ENCODE measurements at regions of chr19 and their contacts with region 1.

Region 1: DNA sequence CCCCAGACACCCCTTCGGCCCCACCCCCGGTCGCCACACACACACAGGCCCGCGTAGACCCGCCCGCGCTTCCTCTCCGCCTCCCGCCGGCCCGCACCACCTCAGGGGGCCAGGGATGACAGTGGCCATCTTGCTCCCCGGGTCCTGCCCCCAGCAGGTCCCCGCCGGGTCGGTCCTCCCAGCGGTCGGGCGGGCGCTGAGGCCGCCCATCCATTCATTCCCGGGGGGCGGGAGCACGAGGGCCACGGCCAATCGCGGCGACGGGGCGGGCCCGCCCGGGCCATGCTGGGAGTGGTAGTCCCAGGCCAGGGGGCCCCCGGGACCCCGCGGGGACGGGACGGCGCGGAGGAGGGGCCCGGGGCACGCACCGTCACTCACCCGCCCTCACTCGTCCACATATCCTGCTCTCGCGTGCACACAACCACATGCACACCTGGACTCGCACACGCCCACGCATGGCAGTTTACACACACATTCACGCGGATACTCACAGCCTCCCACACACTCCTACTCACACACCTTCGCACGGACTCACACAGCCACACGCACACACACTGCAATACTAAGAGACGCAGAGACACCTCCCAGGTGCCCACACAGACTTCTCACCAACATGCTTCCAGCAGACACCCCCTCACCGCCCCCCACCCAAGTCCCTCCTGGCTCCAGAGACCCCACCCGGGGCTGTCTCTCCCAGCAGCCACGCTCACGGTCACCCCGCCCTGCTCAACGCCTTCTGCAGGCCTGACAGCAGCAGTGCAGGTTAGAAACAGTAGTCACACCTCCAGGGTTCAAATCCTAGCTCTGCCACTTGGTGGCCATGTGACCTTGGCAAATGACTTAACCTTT is at the start of gene DPF1:
- DNase-seq: no peak
- H3K4me3 ChIP-seq: no peak within 1 kb of the TSS
- CTCF ChIP-seq: peak in 1 of 3 donors; percentile 29
- POLR2A ChIP-seq: no peak
- total RNA-seq, gene DPF1: not detected

Region 2: GRCh38 chr19:37906869-37907734 is 317.1 kb before region 1 on chr19 and contains the start of gene SIPA1L3:
- intact Hi-C with region 1: loop called (anchors 10 kb)
- DNase-seq: peak; percentile 93 to 99
- H3K4me3 ChIP-seq: peak within 1 kb of the TSS; percentile 83
- CTCF ChIP-seq: no peak
- POLR2A ChIP-seq: no peak
- total RNA-seq, gene SIPA1L3: 50.0 to 69.8 (median 53.6) TPM

Region 3: GRCh38 chr19:38142176-38143035 is 81.8 kb before region 1 on chr19:
- intact Hi-C with region 1: loop called (anchors 10 kb)
- DNase-seq: peak in 1 of 2 donors; percentile 54
- H3K4me3 ChIP-seq: no peak overlapping the region
- CTCF ChIP-seq: peak in 1 of 3 donors; percentile 21
- POLR2A ChIP-seq: no peak

Region 4: DNA sequence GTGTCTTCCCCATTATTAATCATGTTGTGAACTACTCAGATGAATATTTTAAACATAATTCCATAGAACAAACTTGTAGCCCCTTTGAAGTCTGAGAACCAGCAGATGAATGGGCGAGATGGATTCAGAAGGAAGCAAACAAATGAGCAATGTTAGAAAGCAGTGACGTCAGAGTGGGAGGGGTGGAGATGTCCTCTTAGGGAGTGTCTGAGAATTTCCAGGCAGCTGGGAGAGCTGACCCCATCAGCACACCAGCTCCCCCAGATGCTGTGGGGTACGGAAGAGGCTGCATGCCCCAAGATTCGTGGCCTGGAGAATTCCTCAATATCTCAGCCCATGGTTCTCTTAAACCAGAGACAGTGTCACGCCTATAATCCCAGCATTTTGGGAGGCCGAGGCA is 68.8 kb before region 1 on chr19:
- intact Hi-C with region 1: no loop called
- DNase-seq: no peak
- H3K4me3 ChIP-seq: no peak overlapping the region
- CTCF ChIP-seq: no peak
- POLR2A ChIP-seq: no peak

Measured in lower leg skin (tissue), 4 donors.